CD4-positive, alpha-beta memory T cell (primary cell): ENCODE measurements at regions of chr6 and their contacts with region 1.

Region 1: DNA sequence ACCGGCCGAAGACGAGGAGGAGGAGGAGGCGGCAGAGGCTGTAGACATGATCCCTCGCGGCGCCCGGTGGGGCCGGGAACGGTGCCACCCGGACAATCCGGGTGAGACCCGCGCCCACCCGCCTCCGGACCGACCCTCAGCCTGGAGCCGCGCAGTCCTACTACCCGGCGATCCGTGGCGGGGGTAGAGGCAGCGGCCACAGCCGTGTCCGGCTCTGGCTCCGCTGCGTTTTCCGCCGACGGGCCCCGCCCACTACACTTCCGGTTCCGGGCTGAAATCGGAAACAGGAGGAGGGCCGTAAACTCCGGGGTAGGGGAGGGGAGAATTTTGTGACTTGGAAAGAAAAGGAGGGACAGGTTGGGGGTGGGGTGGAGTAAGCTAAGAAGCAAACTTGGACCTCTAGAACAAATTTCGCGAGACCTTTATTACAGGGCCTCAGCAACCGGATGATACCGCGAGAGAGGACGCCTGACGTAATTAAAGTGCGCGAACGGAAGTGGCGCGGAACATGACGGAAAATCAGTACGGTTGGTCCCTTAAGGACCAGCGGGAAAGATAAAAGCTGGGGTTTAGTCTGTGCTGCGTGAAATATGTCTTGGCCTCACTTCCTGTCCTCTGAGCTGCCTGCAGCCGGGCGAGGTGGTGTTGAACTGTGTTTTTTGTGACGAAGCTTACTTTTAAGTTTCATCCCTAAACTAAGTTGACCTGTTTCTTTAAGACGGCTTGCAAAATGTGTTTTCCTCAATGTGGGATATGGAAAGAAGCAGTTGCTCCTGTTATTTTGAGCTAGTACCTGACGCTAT is at the start of gene MAP3K7:
- DNase-seq: peak; percentile 93 to 94 (median 94)
- H3K4me3 ChIP-seq: peak within 1 kb of the TSS; percentile 80 to 82
- H3K4me3 Mint-ChIP-seq: peak within 1 kb of the TSS; percentile 95 to 98 (median 97)
- H3K27ac ChIP-seq: peak within 1 kb of the TSS; percentile 97
- H3K27ac Mint-ChIP-seq: peak within 1 kb of the TSS; percentile 97 to 100 (median 99)
- H3K4me1 ChIP-seq: peaks cover 38% of the 10 kb centered on the region
- H3K4me1 Mint-ChIP-seq: peaks cover 29 to 43% (median 36%) of the 10 kb centered on the region in 4 donors
- H3K27me3 ChIP-seq: no peaks in the 10 kb centered on the region
- H3K27me3 Mint-ChIP-seq: peaks cover 2 to 12% of the 10 kb centered on the region in 2 donors
- total RNA-seq, gene MAP3K7: 33.6 to 34.1 TPM

Region 2: DNA sequence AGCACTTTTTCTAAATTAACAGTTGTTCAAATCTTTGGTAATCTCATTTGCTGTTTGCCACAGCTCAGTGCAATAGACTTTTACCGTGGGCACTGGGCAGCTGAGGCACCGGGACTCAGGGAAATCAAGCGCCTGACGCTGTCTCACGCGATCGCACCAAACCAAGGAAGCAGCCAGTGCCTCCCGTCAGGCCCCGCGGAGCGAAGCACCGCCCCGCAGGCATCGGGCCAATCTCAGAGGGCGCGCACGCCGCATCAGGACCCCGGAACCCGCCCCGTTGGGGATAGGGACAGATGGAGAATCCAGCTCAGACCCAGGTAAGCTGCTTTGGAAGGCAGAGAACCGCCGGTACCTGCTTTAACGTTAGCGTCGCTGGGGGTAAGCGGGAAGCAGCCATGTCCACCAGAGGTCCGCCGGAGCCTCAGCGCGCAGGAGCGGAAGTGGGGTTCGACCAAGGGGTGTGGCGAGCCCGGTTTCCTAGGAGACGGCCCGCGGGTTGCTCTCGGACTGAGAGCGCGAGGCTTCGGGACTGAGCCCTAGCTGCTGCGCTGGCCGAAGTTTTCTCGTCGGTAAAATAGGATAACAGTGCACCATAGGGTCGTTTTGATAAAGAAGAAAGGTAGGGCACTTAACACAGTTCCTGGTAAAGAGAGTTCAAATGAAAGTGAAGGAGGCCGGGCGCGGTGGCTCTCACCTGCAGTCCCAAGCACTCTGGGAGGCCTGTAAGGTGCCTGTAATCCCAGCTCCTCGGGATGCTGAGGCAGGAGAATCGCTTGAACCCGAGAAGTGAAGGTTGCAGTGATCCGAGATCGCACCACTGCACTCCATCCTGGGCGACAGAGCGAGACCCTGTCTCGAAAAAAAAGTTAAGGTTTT is 948.5 kb before region 1 on chr6 and contains the start of gene LYRM2:
- CTCF ChIA-PET with region 1: no interaction called
- POLR2A ChIA-PET with region 1: interaction called, 3 read pairs
- intact Hi-C with region 1: loop called (anchors 2 kb)
- DNase-seq: peak; percentile 90 to 94 (median 92)
- H3K4me3 ChIP-seq: peak within 1 kb of the TSS; percentile 97 to 99
- H3K4me3 Mint-ChIP-seq: peak within 1 kb of the TSS; percentile 95 to 98 (median 96)
- H3K27ac ChIP-seq: peak within 1 kb of the TSS; percentile 95
- H3K27ac Mint-ChIP-seq: peak within 1 kb of the TSS; percentile 98 to 100 (median 99)
- H3K4me1 ChIP-seq: peaks cover 18% of the 10 kb centered on the region
- H3K4me1 Mint-ChIP-seq: peaks cover 20 to 45% (median 29%) of the 10 kb centered on the region in 4 donors
- H3K27me3 ChIP-seq: no peaks in the 10 kb centered on the region
- H3K27me3 Mint-ChIP-seq: no peaks in the 10 kb centered on the region
- total RNA-seq, gene LYRM2: 31.8 to 36.7 TPM

Region 3: DNA sequence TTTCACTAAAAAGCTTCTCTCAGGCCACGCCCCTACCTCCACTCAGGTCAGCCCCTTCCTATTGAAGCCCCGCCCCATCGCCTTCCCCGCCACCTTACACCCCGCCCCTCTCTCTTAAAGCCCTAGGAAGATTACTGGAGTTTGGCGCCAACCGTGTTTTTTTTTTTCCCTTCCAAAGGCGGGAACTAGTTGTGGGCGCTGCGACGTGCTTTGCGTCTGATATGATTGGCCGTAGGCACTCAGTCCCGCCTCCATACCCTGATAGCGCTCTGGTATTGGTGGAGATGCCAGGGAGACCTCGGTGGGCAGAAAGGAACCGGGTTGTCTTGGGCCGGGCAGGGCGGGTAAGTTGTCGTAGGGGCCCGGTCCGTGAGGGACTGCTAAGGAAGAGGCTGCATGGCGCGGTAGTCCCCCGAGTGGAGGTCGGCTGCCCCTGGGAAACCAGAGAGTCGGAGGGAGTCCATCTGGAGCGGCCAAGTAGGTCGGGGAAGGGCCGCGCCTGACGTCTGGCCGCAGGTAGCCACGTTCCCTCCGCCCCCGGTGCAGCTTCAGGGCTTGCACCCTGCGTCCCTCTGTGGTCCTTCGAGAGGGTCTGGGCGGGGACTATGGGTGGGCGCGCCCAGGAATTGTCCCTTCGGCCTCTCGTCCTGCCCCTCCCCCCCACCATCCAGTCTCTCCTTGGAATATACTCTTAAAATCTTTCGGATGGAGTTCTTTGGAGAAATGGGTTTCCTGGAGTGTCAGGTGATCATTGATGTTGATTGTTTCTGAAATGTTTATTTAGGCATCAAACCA is 757.2 kb before region 1 on chr6 and contains the start of gene CASP8AP2:
- CTCF ChIA-PET with region 1: no interaction called
- POLR2A ChIA-PET with region 1: no interaction called
- intact Hi-C with region 1: loop called (anchors 2 kb)
- DNase-seq: peak; percentile 93 to 98 (median 98)
- H3K4me3 ChIP-seq: peak within 1 kb of the TSS; percentile 85 to 86
- H3K4me3 Mint-ChIP-seq: peak within 1 kb of the TSS; percentile 98 to 100 (median 99)
- H3K27ac ChIP-seq: peak within 1 kb of the TSS; percentile 74
- H3K27ac Mint-ChIP-seq: peak within 1 kb of the TSS; percentile 79 to 99 (median 97)
- H3K4me1 ChIP-seq: peaks cover 32% of the 10 kb centered on the region
- H3K4me1 Mint-ChIP-seq: peaks cover 17 to 52% (median 37%) of the 10 kb centered on the region in 4 donors
- H3K27me3 ChIP-seq: no peaks in the 10 kb centered on the region
- H3K27me3 Mint-ChIP-seq: no peaks in the 10 kb centered on the region
- total RNA-seq, gene CASP8AP2: 59.4 to 61.7 TPM

Region 4: DNA sequence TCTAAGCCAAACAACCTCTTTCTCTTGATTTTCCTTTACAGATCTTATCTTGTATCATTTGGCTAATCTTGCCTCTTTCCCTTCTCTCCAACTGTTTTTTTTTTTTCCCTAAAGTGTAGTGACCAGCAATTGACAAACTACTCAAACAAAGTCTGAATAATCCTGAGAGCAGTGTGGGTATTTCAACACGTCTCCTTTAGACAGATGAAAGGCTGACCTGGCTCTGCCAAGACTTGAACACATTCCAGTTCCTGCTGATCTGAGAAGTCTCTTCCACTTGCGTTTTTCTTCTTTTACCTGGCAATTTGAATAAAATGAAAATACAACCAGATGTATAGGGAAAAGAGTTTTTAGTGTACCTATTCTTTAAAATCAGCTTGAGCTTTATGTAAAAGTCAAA is 524.4 kb before region 1 on chr6:
- CTCF ChIA-PET with region 1: no interaction called
- POLR2A ChIA-PET with region 1: no interaction called
- intact Hi-C with region 1: no loop called
- DNase-seq: no peak
- H3K4me3 ChIP-seq: no peak overlapping the region
- H3K4me3 Mint-ChIP-seq: no peak overlapping the region
- H3K27ac ChIP-seq: no peak overlapping the region
- H3K27ac Mint-ChIP-seq: no peak overlapping the region
- H3K4me1 ChIP-seq: peaks cover 10% of the 10 kb centered on the region
- H3K4me1 Mint-ChIP-seq: peaks cover 26 to 42% (median 30%) of the 10 kb centered on the region in 4 donors
- H3K27me3 ChIP-seq: no peaks in the 10 kb centered on the region
- H3K27me3 Mint-ChIP-seq: no peaks in the 10 kb centered on the region

Region 5: DNA sequence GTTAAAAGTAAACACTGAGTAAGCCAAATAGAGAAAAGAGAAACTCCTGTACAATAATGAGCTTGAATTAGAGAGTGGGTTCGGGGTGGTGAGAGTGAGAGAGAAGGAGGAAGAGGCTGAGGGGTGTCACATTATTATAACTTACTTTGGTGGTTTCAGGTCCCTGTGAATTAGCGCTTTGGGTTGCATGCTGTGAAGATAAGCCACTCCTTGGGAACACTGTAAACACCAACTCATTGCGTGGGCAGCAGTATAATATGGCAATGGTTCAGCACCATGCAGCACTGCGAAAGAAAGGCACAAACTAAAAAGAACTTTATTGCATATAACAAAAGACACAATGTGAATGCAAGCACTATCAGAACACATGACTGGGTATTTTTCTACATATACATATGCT is 27.1 kb before region 1 on chr6:
- CTCF ChIA-PET with region 1: interaction called, 3 read pairs
- POLR2A ChIA-PET with region 1: interaction called, 11 read pairs
- intact Hi-C with region 1: loop called (anchors 1 kb)
- DNase-seq: no peak
- H3K4me3 ChIP-seq: no peak overlapping the region
- H3K4me3 Mint-ChIP-seq: peak overlapping the region in 1 of 8 donors; percentile 49
- H3K27ac ChIP-seq: no peak overlapping the region
- H3K27ac Mint-ChIP-seq: peak overlapping the region in 2 of 7 donors; percentile 37 to 46
- H3K4me1 ChIP-seq: peaks cover 17% of the 10 kb centered on the region
- H3K4me1 Mint-ChIP-seq: peaks cover 25 to 38% (median 29%) of the 10 kb centered on the region in 4 donors
- H3K27me3 ChIP-seq: no peaks in the 10 kb centered on the region
- H3K27me3 Mint-ChIP-seq: no peaks in the 10 kb centered on the region